ENCODE measurements at regions of chr13 and their contacts with region 1.

Region 1: DNA sequence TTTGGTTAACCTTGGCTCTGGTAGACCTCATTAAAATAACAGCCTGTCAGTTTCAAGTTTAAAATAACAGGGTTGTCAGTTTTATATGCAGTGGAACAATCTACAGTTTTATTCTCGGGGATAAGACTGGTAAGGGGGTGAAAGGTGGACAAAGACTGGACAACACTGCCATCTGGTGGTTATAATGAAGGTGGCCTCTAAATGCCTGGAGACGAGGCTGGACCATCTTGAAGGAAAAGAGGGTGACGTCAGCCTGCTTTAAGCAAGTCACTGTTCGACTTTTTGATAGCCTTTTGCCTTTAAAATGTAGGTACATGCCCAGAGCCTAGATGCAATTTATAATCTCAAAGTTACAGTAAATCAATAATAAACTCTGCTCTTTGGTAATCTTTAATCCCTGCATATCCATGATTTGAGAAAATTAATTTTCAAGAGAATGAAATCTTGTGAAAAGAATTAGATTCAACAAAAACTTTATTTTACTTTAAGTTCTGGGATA is 117.0 kb downstream of the DCT start:
- DNase-seq: peak; percentile 82
- ATAC-seq: peak; percentile 96
- H3K4me3 ChIP-seq: no peak overlapping the region
- H3K27ac ChIP-seq: no peak overlapping the region
- H3K4me1 ChIP-seq: no peaks in the 10 kb centered on the region
- H3K27me3 ChIP-seq: no peaks in the 10 kb centered on the region
- CTCF ChIP-seq: peak; percentile 84

Region 2: GRCh38 chr13:92896842-92897241 is 1465.6 kb before region 1 on chr13:
- CTCF ChIA-PET with region 1: no interaction called
- POLR2A ChIA-PET with region 1: no interaction called
- intact Hi-C with region 1: loop called (anchors 2 kb)
- DNase-seq: peak; percentile 63
- ATAC-seq: peak; percentile 71
- H3K4me3 ChIP-seq: no peak overlapping the region
- H3K27ac ChIP-seq: no peak overlapping the region
- H3K4me1 ChIP-seq: no peaks in the 10 kb centered on the region
- H3K27me3 ChIP-seq: no peaks in the 10 kb centered on the region
- CTCF ChIP-seq: peak; percentile 52

Region 3: DNA sequence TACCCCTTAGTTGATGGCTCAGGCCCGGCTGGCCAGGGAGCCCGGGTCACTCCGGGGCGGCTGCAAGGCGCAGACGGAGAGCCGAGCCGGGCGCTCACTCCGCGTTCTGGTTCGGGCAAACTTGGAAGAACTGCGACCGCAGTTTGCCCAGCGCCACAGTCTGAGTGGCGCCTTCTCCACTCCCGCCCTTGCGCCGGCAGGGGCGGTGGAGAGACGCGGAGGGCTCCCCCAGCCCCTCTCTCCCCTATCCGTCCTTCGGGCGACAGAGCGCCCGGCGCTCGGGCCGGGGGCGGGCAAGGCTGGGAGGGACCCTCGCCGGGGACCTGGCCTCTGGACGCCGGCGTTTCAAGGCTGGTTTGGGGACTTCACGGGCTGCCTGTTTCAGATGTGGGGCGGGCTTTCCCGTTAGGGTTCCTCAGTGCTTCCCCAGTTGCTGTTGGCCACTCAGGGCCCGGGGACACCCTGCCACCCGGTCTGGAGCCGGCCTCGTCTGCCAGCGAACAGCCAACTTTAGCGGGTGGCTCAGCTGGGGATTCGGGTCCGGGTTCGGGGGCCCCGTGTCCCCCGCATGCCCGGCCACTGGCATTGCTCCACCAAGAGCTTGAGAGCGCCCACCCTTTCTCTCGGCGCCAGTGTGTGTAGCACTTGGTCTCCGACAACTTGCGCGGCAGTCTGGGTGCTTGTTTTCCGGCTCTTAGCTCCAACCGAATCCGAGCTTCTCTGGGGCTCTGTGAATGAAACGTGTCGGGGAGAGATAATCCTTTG is 1134.4 kb before region 1 on chr13:
- CTCF ChIA-PET with region 1: no interaction called
- POLR2A ChIA-PET with region 1: no interaction called
- intact Hi-C with region 1: loop called (anchors 5 kb)
- DNase-seq: peak; percentile 64
- ATAC-seq: peak; percentile 65
- H3K4me3 ChIP-seq: peak overlapping the region; percentile 88
- H3K27ac ChIP-seq: no peak overlapping the region
- H3K4me1 ChIP-seq: peaks cover 43% of the 10 kb centered on the region
- H3K27me3 ChIP-seq: no peaks in the 10 kb centered on the region
- CTCF ChIP-seq: peak; percentile 37; the same call in 1 of the 2 replicates

Region 4: DNA sequence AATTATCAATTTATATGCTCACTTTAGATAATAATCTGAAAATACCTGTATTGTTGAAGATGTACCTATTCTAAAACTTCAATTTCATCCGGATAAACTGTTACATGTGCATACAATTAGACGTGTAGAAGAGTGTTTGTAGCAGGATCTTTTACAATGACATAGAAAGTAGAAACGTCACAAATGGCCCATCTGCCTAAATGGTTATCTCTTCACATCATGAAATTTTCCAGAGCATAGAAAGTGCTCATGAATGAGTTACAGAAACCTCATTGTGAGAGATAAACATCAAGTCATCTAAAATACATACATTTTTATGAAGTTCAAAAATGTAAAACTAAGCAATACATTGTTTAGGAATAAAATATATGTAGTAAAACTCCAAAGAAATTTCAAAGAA is 528.4 kb before region 1 on chr13:
- CTCF ChIA-PET with region 1: no interaction called
- POLR2A ChIA-PET with region 1: no interaction called
- intact Hi-C with region 1: no loop called
- DNase-seq: no peak
- ATAC-seq: no peak
- H3K4me3 ChIP-seq: no peak overlapping the region
- H3K27ac ChIP-seq: no peak overlapping the region
- H3K4me1 ChIP-seq: no peaks in the 10 kb centered on the region
- H3K27me3 ChIP-seq: no peaks in the 10 kb centered on the region
- CTCF ChIP-seq: no peak

Region 5: DNA sequence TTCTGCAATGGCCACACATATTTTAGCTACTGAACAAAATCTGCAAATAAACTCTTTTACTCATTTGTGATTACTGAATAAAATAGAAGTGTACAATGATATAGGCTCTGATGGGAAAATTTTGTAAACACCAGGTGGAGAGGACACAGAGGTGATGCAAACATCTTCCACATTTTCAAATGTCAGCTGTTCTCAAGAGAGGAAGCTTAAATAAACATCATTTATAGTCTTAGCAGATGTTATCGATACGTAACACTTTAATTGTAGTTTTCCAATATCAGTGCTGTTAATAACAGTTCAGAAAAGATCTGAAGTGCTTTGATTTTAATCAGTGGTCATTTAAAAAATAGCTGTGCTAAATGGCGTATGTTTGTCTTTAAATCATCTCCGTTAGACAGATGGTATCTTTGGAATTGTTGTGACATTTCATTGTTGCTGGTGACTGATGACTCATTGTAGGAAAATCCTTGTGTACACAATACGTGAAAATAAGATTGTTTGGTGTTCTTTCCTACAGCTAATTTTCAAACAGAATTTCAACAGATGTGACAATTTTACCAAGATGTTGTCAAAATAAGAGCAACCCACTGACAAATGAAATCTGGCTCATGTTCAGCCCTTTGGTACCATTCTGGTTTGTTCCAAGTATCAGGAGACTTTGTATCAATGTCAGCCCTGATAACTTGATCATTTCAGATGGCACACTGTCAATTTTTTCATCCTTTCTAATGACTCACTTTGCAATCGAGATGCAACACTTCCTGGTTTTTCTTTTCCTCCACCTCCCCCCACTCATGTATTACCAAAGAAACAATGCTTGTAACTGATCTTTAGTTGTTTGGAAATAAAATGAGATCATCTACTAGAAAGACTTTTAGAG is 399.0 kb before region 1 on chr13:
- CTCF ChIA-PET with region 1: no interaction called
- POLR2A ChIA-PET with region 1: no interaction called
- intact Hi-C with region 1: loop called (anchors 5 kb)
- DNase-seq: peak; percentile 73
- ATAC-seq: peak; percentile 88
- H3K4me3 ChIP-seq: no peak overlapping the region
- H3K27ac ChIP-seq: peak overlapping the region; percentile 74
- H3K4me1 ChIP-seq: peaks cover 19% of the 10 kb centered on the region
- H3K27me3 ChIP-seq: no peaks in the 10 kb centered on the region
- CTCF ChIP-seq: no peak

Region 6: GRCh38 chr13:94170145-94170571 is 192.3 kb before region 1 on chr13:
- CTCF ChIA-PET with region 1: no interaction called
- POLR2A ChIA-PET with region 1: no interaction called
- intact Hi-C with region 1: loop called (anchors 5 kb)
- DNase-seq: no peak
- ATAC-seq: no peak
- H3K4me3 ChIP-seq: no peak overlapping the region
- H3K27ac ChIP-seq: no peak overlapping the region
- H3K4me1 ChIP-seq: no peaks in the 10 kb centered on the region
- H3K27me3 ChIP-seq: no peaks in the 10 kb centered on the region
- CTCF ChIP-seq: no peak

Region 7: DNA sequence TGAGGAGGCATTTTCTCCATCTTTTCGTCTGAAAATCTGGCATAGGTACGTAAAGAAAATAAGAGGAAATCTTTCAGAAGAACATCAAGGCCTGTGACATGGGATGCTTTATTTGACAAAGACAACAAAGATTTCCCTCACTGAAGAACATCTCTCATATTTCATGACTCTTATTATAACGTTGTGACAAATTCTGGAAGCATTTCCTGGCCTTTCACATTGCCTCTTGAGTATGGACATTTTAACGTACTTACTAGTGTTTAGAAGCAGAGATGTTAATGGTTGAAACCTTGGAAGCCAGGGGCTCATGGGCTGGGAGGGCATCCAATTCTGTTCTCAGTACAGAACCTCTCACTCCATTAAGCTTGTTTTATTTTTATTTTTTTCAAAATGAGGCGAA is 93.8 kb before region 1 on chr13:
- CTCF ChIA-PET with region 1: no interaction called
- POLR2A ChIA-PET with region 1: no interaction called
- intact Hi-C with region 1: loop called (anchors 1 kb)
- DNase-seq: peak; percentile 11
- ATAC-seq: peak; percentile 39; the same call in 1 of the 2 replicates
- H3K4me3 ChIP-seq: no peak overlapping the region
- H3K27ac ChIP-seq: no peak overlapping the region
- H3K4me1 ChIP-seq: peaks cover 7% of the 10 kb centered on the region
- H3K27me3 ChIP-seq: no peaks in the 10 kb centered on the region
- CTCF ChIP-seq: no peak

Measured in PC-3 (cell line).